CD14-positive monocyte (primary cell): ENCODE measurements at regions of chr11 and their contacts with region 1.

Region 1: DNA sequence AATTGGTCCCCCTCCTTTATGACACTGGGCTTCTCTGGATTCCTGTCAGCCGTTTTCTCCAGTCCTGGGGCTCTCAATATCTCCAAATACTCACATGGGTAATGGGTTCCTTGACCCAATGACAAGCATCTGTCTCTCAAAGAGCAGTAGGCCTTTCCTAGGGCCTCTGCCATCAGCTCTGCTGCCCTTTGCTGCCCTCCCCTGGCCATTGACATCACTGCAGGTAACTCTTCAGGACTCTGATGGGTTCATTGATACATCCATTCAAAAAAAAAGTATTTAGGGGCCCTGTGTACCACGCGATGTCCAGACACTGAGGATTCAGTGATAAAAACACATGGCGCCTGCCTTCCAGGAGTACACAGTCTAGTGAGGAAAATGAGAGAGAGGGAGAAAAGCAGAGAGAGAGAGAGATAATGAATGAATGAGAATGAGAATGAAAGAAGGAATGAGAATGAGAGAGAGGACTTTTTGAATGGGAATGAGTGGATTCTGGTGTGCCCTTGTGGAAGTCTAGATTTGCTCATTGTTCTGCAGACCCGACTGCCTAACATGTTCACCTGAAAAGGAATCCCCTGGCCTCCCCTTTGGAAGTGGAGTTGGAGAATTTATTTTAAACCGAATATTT is 42.6 kb upstream of the OLFML1 start:
- DNase-seq: peak; percentile 45 to 67 (median 56)
- H3K4me3 ChIP-seq: no peak overlapping the region
- H3K4me3 Mint-ChIP-seq: no peak overlapping the region
- H3K27ac ChIP-seq: no peak overlapping the region
- H3K27ac Mint-ChIP-seq: no peak overlapping the region
- H3K4me1 ChIP-seq: peaks cover 18 to 24% of the 10 kb centered on the region in 2 donors
- H3K4me1 Mint-ChIP-seq: peaks cover 26% of the 10 kb centered on the region
- H3K27me3 ChIP-seq: no peaks in the 10 kb centered on the region
- H3K27me3 Mint-ChIP-seq: peaks cover 2 to 13% (median 4%) of the 10 kb centered on the region in 3 donors
- CTCF ChIP-seq: peak; percentile 89

Region 2: GRCh38 chr11:7098235-7098832 is 344.4 kb before region 1 on chr11:
- intact Hi-C with region 1: loop called in 1 of 2 experiments (anchors 10 kb)
- DNase-seq: peak; percentile 12 to 40 (median 28)
- H3K4me3 ChIP-seq: no peak overlapping the region
- H3K4me3 Mint-ChIP-seq: no peak overlapping the region
- H3K27ac ChIP-seq: no peak overlapping the region
- H3K27ac Mint-ChIP-seq: no peak overlapping the region
- H3K4me1 ChIP-seq: no peaks in the 10 kb centered on the region
- H3K4me1 Mint-ChIP-seq: no peaks in the 10 kb centered on the region
- H3K27me3 ChIP-seq: peaks cover 0 to 5% of the 10 kb centered on the region in 2 donors
- H3K27me3 Mint-ChIP-seq: peaks cover 3 to 13% (median 4%) of the 10 kb centered on the region in 3 donors
- CTCF ChIP-seq: peak; percentile 62

Region 3: GRCh38 chr11:7353100-7353499 is 89.6 kb before region 1 on chr11:
- intact Hi-C with region 1: loop called (anchors 10 kb)
- DNase-seq: peak in 2 of 3 donors; percentile 9 to 22
- H3K4me3 ChIP-seq: no peak overlapping the region
- H3K4me3 Mint-ChIP-seq: no peak overlapping the region
- H3K27ac ChIP-seq: no peak overlapping the region
- H3K27ac Mint-ChIP-seq: no peak overlapping the region
- H3K4me1 ChIP-seq: no peaks in the 10 kb centered on the region
- H3K4me1 Mint-ChIP-seq: no peaks in the 10 kb centered on the region
- H3K27me3 ChIP-seq: no peaks in the 10 kb centered on the region
- H3K27me3 Mint-ChIP-seq: peaks cover 0 to 3% (median 0%) of the 10 kb centered on the region in 3 donors
- CTCF ChIP-seq: peak; percentile 49